Ovary (tissue), 10 donors: ENCODE measurements at regions of chr6 and their contacts with region 1.

Region 1: DNA sequence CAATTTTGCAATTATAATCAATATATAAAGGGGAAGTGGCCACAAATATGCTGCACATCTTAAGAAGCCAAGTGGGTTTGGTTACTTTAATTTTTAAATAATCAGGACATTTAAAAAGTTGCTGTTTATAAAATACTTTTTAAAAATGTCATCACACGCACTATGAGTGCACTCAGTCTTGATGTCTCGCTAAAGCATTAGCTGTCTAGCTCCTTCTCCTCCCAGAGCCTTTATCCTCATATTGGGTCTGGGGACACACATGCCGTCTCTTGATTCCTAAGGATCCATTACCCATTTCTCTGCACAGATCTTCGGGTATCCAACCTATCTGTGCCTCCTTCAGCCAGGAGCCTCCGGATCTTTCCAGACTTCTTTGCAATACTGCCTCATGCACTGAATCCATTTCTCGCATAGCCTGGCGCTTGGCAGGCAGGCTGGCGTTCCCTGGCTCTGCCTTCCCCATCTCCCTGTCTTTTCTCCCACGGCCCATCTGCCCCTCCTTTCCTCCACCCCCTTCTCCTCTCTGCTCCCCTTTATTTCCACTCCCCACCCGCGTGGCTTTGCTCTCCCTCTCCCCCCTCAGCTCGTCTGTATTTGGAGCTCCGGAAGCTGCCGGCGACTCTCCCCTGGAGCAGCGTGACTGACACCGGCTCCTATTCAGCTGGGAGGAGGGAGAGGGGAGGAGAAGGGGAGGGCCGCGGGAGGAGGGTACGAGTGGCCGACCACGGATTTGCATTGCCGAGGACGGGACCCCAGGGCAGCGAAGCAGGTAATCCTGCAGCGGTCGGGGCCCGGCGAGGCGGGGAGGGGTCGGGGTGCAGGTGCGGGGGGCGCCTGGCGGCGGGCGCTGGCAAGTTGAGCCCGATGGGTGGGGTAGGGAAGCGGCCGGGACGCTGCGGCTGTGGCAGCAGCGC is at the start of gene CAP2:
- DNase-seq: peak; percentile 27 to 54 (median 47)
- H3K4me3 ChIP-seq: peak within 1 kb of the TSS; percentile 75
- H3K27ac ChIP-seq: peak within 1 kb of the TSS; percentile 46 to 50
- H3K4me1 ChIP-seq: no peaks in the 10 kb centered on the region
- H3K27me3 ChIP-seq: no peaks in the 10 kb centered on the region
- CTCF ChIP-seq: no peak
- EP300 ChIP-seq: no peak
- POLR2A ChIP-seq: no peak
- total RNA-seq, gene CAP2: 2.0 to 16.6 (median 4.5) TPM

Region 2: GRCh38 chr6:17281100-17281494 is 112.1 kb before region 1 on chr6 and contains the start of gene RBM24:
- intact Hi-C with region 1: loop called in 1 of 4 experiments (anchors 10 kb)
- DNase-seq: peak; percentile 51 to 70 (median 66)
- H3K4me3 ChIP-seq: peak within 1 kb of the TSS; percentile 53
- H3K27ac ChIP-seq: peak within 1 kb of the TSS; percentile 68 to 72
- H3K4me1 ChIP-seq: peaks cover 4% of the 10 kb centered on the region
- H3K27me3 ChIP-seq: no peaks in the 10 kb centered on the region
- CTCF ChIP-seq: no peak
- EP300 ChIP-seq: no peak
- POLR2A ChIP-seq: no peak
- total RNA-seq, gene RBM24: 1.1 to 6.5 (median 2.0) TPM

Region 3: GRCh38 chr6:18663011-18663410 is 1269.8 kb after region 1 on chr6:
- intact Hi-C with region 1: no loop called
- DNase-seq: no peak
- H3K4me3 ChIP-seq: no peak overlapping the region
- H3K27ac ChIP-seq: no peak overlapping the region
- H3K4me1 ChIP-seq: no peaks in the 10 kb centered on the region
- H3K27me3 ChIP-seq: no peaks in the 10 kb centered on the region
- CTCF ChIP-seq: no peak
- EP300 ChIP-seq: no peak
- POLR2A ChIP-seq: no peak